ENCODE measurements at regions of chr14 and their contacts with region 1.

Region 1: DNA sequence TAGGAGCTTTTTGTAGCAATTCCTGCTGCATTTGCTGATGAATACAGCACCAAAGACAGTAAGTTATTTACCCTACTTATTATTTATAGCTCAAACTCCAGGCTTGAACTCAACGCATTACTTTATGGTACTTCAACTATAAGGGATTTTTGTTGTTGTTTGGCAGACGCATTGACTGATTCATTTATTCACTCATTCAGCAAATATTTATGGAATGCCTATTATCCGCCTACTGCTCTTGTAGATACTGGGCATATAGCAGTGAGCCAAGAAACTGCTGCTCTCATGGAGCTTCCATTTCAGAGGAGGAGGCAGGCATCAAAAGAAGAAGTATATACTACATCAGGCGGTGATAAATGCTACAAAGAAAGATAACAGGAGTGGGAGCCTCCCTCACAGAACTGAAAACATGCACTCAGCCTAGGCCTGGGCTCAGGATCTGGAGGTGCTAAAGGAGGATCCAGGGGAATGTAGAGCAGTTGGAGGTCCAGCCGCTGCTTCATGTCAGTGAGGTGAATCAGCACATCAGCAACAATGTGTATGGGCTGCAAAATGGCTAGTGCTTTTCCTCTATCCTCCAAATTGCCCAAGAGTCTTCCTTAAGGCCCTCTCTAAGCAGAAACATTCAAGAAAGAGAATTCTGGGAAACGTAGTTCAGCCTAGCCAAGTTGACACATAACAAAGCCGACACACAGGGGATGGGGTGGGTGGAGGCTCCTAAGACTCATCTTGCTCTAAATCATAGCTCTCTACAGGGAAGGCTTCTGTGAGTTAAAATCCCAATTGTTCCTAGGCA is 157.5 kb downstream of the NRXN3 start:
- DNase-seq: no peak
- ATAC-seq: no peak
- H3K4me3 ChIP-seq: no peak overlapping the region
- H3K27ac ChIP-seq: no peak overlapping the region
- H3K4me1 ChIP-seq: no peaks in the 10 kb centered on the region
- H3K27me3 ChIP-seq: no peaks in the 10 kb centered on the region

Region 2: DNA sequence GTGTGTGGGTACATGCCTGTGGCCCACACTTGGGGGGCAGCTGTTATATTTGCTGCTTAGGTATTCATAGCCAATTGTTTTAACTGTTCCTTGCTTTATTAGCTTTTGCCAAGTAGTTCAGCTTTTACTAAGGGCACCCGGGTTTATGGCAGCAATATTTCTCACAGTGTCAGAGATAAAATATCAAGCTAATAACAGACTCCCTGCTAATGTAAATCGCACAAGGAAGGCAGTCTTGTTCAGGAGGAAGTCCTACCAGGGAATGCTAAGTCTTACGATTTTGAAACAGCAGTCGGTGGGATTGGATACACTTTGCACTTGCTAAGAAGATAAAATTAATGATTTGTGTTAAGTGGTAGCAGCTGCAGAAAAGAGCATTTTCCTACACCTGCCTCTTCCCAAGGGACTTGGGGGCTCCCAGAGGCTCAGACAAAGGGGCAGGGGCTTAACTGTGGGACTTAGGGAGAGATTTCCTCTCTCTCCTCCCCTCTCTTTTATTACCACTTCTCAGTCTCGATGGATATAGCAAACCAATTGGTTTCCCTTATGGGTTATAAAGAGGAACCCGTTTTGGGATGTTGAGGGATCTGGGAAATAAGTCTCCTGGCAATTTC is 17.6 kb after region 1 on chr14:
- intact Hi-C with region 1: no loop called
- DNase-seq: no peak
- ATAC-seq: no peak
- H3K4me3 ChIP-seq: no peak overlapping the region
- H3K27ac ChIP-seq: no peak overlapping the region
- H3K4me1 ChIP-seq: no peaks in the 10 kb centered on the region
- H3K27me3 ChIP-seq: no peaks in the 10 kb centered on the region

Region 3: GRCh38 chr14:78417532-78417931 is 89.9 kb after region 1 on chr14:
- intact Hi-C with region 1: no loop called
- DNase-seq: no peak
- ATAC-seq: no peak
- H3K4me3 ChIP-seq: no peak overlapping the region
- H3K27ac ChIP-seq: no peak overlapping the region
- H3K4me1 ChIP-seq: no peaks in the 10 kb centered on the region
- H3K27me3 ChIP-seq: no peaks in the 10 kb centered on the region

Region 4: DNA sequence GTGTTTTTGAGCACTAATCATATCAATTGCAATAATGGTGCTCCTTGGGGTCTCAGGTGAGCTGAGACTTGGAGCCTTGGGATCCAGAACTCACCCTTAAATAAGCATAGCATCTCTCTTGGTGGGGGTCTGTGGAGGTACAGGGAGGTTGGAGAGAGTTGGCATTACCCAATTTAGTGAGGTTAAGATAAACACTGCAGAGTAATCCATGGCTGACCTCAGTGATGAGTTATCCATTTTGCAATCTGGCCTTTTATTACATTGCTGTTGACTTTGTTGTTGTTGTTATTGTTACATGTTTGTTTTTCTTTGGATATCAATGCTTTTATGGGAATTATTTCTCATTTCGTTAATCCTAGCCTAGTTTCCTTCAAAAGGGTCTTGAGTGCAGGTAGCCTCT is 215.8 kb after region 1 on chr14:
- intact Hi-C with region 1: loop called in 1 of 2 experiments (anchors 5 kb)
- DNase-seq: no peak
- ATAC-seq: no peak
- H3K4me3 ChIP-seq: no peak overlapping the region
- H3K27ac ChIP-seq: no peak overlapping the region
- H3K4me1 ChIP-seq: no peaks in the 10 kb centered on the region
- H3K27me3 ChIP-seq: no peaks in the 10 kb centered on the region

Measured in aorta (tissue), 5 donors.